Heart right ventricle (tissue), 16 donors: ENCODE measurements at regions of chr19 and their contacts with region 1.

Region 1: GRCh38 chr19:34974646-34975045 is 10.6 kb upstream of the ZNF792 start:
- DNase-seq: no peak
- ATAC-seq: no peak
- H3K4me3 ChIP-seq: no peak overlapping the region
- H3K27ac ChIP-seq: peak overlapping the region in 1 of 10 donors; percentile 71
- H3K4me1 ChIP-seq: peaks cover 0 to 32% (median 0%) of the 10 kb centered on the region in 9 donors
- H3K27me3 ChIP-seq: no peaks in the 10 kb centered on the region
- CTCF ChIP-seq: no peak

Region 2: DNA sequence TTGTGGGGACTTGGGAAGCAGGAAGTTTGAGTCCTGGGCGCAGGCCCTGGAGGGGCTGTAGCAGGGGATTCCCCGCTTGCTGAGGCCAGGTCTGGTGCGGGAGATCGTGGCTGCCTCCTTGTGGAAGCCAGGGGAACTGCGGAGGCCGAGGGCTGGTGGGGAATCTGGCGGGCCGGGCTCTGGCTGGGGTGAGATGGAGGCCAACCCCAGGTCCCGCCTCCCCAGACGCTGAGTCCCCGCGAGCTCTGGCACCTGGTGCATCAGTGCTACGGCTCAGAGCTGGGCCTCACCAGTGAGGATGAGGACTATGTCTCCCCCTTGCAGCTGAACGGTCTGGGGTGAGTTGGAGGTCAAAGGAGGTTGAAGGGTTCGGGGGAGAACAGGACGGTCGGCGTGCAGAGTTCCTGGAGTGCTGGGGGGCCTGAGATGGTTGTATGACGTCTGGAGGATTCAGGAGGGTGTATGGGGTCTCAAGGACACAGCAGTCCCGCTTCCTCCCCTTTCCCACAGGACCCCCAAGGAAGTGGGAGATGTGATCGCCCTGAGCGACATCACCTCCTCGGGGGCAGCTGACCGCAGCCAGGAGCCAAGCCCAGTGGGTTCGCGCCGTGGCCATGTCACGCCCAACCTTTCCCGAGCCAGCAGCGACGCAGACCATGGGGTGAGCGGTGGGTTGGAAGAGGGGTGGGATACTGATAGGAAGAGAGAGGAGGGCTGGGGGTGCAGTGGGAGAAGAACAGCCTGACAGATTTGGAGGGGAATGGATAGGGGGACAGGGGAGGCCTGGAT is 38.6 kb after region 1 on chr19:
- intact Hi-C with region 1: loop called (anchors 1 to 5 kb)
- DNase-seq: peak; percentile 78 to 81
- ATAC-seq: peak; percentile 68 to 79 (median 72)
- H3K4me3 ChIP-seq: no peak overlapping the region
- H3K27ac ChIP-seq: peak overlapping the region in 5 of 10 donors; percentile 25 to 73 (median 66)
- H3K4me1 ChIP-seq: peaks cover 2 to 63% (median 25%) of the 10 kb centered on the region in 9 donors
- H3K27me3 ChIP-seq: no peaks in the 10 kb centered on the region
- CTCF ChIP-seq: peak; percentile 86 to 99 (median 97)

Region 3: GRCh38 chr19:35044317-35045117 is 69.9 kb after region 1 on chr19:
- intact Hi-C with region 1: loop called in 1 of 10 experiments (anchors 2 kb)
- DNase-seq: peak; percentile 55 to 67
- ATAC-seq: no peak
- H3K4me3 ChIP-seq: no peak overlapping the region
- H3K27ac ChIP-seq: no peak overlapping the region
- H3K4me1 ChIP-seq: peaks cover 10 to 54% (median 32%) of the 10 kb centered on the region in 9 donors
- H3K27me3 ChIP-seq: peaks cover 0 to 7% (median 0%) of the 10 kb centered on the region in 7 donors
- CTCF ChIP-seq: peak; percentile 90 to 99 (median 97)

Region 4: DNA sequence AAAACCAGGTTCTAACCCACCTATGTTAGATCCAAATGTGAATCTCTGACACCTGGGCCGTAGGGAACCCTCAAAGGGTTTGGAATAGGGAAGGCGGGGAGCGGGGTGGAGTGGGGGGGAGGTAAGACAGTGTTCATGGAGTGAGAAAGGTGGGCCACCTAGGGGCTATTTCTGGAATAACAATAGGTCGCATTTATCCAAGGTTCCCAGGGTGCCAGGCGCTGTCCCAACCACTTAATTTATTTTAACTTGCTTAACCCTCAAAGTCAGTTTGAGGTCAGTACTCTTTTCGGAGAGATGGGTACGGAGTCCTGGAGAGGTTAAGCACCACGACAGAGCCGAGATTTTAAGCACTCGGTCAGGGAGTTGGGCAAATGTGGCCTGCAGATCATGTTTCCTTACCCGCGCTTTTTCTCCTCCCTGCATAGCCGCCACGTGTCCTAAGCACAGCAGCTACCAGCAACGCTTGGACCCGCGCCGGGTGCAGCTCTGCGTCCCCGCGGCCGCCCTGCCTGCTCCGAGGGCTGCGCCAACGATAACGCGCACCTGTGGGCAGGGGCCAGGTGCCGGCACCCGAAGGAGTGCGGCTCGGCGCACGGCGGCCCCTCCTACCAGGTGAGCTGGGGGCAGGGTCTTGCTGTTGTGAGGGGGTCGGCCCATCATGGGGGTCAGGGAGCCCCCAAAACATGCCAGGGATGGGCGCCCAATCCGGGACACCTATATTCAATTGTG is 116.0 kb after region 1 on chr19:
- intact Hi-C with region 1: loop called in 8 of 10 experiments (anchors 1 to 10 kb)
- DNase-seq: peak in 1 of 2 donors; percentile 57
- ATAC-seq: peak; percentile 74 to 92 (median 86)
- H3K4me3 ChIP-seq: no peak overlapping the region
- H3K27ac ChIP-seq: no peak overlapping the region
- H3K4me1 ChIP-seq: peaks cover 0 to 10% (median 9%) of the 10 kb centered on the region in 9 donors
- H3K27me3 ChIP-seq: peaks cover 0 to 35% (median 13%) of the 10 kb centered on the region in 7 donors
- CTCF ChIP-seq: peak; percentile 43 to 71 (median 67)

Region 5: GRCh38 chr19:35135389-35135909 is 160.8 kb after region 1 on chr19:
- intact Hi-C with region 1: loop called in 1 of 10 experiments (anchors 5 kb)
- DNase-seq: peak; percentile 80 to 85
- ATAC-seq: peak; percentile 48 to 65 (median 55)
- H3K4me3 ChIP-seq: peak overlapping the region in 9 of 10 donors; percentile 12 to 48 (median 33)
- H3K27ac ChIP-seq: peak overlapping the region; percentile 17 to 80 (median 68)
- H3K4me1 ChIP-seq: peaks cover 6 to 48% (median 29%) of the 10 kb centered on the region in 9 donors
- H3K27me3 ChIP-seq: peaks cover 0 to 7% (median 0%) of the 10 kb centered on the region in 7 donors
- CTCF ChIP-seq: peak; percentile 77 to 99 (median 94)